ENCODE measurements at regions of chr6 and their contacts with region 1.

Region 1: GRCh38 chr6:42453031-42453653 is 1.4 kb upstream of the TRERF1 start:
- DNase-seq: peak; percentile 90 to 91
- ATAC-seq: peak; percentile 91 to 96 (median 92)
- H3K4me3 ChIP-seq: peak overlapping the region; percentile 61 to 91 (median 80)
- H3K27ac ChIP-seq: peak overlapping the region; percentile 68 to 97 (median 92)
- H3K4me1 ChIP-seq: peaks cover 3 to 46% (median 19%) of the 10 kb centered on the region in 9 donors
- H3K27me3 ChIP-seq: no peaks in the 10 kb centered on the region
- CTCF ChIP-seq: peak in 4 of 9 donors; percentile 7 to 27 (median 8)

Region 2: GRCh38 chr6:42217519-42218367 is 235.4 kb before region 1 on chr6 and contains the start of gene MRPS10:
- intact Hi-C with region 1: loop called in 1 of 10 experiments (anchors 10 kb)
- DNase-seq: peak; percentile 88 to 94
- ATAC-seq: peak; percentile 99 to 100 (median 100)
- H3K4me3 ChIP-seq: peak within 1 kb of the TSS; percentile 59 to 88 (median 77)
- H3K27ac ChIP-seq: peak within 1 kb of the TSS in 9 of 10 donors; percentile 49 to 89 (median 81)
- H3K4me1 ChIP-seq: peaks cover 0 to 28% (median 20%) of the 10 kb centered on the region in 9 donors
- H3K27me3 ChIP-seq: no peaks in the 10 kb centered on the region
- CTCF ChIP-seq: no peak
- total RNA-seq, gene MRPS10: 47.4 to 82.1 (median 63.1) TPM

Region 3: DNA sequence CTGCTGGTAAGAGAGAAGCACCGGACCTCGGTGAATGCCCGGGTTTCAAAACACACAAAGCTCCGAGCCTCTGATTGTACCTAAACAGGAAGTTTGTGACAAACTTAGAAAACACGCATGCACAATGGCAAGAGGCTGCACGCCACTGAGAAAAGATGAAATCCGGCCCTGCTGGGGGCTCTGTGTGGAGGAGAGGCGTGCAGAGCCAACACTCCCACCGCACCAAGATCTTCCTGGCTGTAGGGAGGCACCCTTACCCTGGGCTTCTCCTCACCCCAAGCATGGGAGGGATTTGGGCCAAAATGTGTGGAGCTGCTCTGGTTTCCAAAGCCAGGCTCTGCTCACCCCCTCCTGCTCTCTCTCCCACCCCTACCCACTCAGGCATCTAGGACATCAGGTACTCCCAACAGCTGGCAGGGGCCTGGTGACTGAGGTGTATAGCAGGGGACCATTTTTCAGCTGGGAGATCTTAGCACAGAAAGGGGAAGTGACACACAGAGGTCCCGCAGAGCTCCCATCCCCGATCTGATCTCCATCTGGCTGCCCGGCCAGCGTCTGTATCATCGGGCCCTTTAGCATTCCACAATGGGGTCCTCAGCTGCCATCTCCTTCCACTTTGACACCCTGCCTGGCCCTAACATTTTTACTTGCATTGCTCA is 85.7 kb before region 1 on chr6:
- intact Hi-C with region 1: loop called in 1 of 10 experiments (anchors 5 kb)
- DNase-seq: peak in 1 of 2 donors; percentile 8
- ATAC-seq: peak in 6 of 8 donors; percentile 20 to 49 (median 40)
- H3K4me3 ChIP-seq: peak overlapping the region in 2 of 10 donors; percentile 25 to 36
- H3K27ac ChIP-seq: peak overlapping the region in 5 of 10 donors; percentile 7 to 90 (median 49)
- H3K4me1 ChIP-seq: peaks cover 0 to 79% (median 28%) of the 10 kb centered on the region in 9 donors
- H3K27me3 ChIP-seq: no peaks in the 10 kb centered on the region
- CTCF ChIP-seq: no peak

Region 4: GRCh38 chr6:42407379-42407778 is 45.8 kb before region 1 on chr6:
- intact Hi-C with region 1: loop called in 4 of 10 experiments (anchors 2 to 5 kb)
- DNase-seq: no peak
- ATAC-seq: peak in 5 of 8 donors; percentile 40 to 65 (median 60)
- H3K4me3 ChIP-seq: no peak overlapping the region
- H3K27ac ChIP-seq: peak overlapping the region in 7 of 10 donors; percentile 26 to 74 (median 51)
- H3K4me1 ChIP-seq: peaks cover 3 to 80% (median 41%) of the 10 kb centered on the region in 9 donors
- H3K27me3 ChIP-seq: no peaks in the 10 kb centered on the region
- CTCF ChIP-seq: no peak

Region 5: GRCh38 chr6:42532038-42532669 is 79.0 kb after region 1 on chr6:
- intact Hi-C with region 1: loop called in 4 of 10 experiments (anchors 5 to 10 kb)
- DNase-seq: peak in 1 of 2 donors; percentile 26
- ATAC-seq: peak in 4 of 8 donors; percentile 51 to 69 (median 60)
- H3K4me3 ChIP-seq: no peak overlapping the region
- H3K27ac ChIP-seq: no peak overlapping the region
- H3K4me1 ChIP-seq: peaks cover 0 to 15% (median 5%) of the 10 kb centered on the region in 9 donors
- H3K27me3 ChIP-seq: no peaks in the 10 kb centered on the region
- CTCF ChIP-seq: peak; percentile 78 to 89 (median 88)